Heart right ventricle (tissue), 16 donors: ENCODE measurements at regions of chr11 and their contacts with region 1.

Region 1: DNA sequence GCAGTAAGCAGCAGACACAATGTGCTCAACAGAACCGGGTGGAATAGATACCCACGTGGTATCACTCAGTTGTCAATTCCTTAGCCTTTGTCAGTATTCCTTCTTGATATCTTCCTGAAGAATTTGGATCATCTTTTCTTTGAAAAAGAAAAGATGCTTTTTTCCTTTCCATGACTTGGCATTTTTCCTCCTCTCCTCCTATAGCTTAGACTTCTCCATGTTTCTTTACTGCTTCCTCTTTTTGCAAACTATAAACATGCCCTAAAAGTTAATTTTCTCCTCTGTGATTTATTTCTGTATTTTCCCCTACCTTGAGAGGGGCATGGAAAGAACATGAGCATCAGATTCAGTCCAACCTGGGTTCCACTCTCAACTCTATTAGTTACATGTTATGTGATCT is 11.7 kb downstream of the CBLIF start:
- DNase-seq: no peak
- ATAC-seq: no peak
- H3K4me3 ChIP-seq: no peak overlapping the region
- H3K27ac ChIP-seq: no peak overlapping the region
- H3K4me1 ChIP-seq: no peaks in the 10 kb centered on the region
- H3K27me3 ChIP-seq: no peaks in the 10 kb centered on the region
- CTCF ChIP-seq: no peak

Region 2: DNA sequence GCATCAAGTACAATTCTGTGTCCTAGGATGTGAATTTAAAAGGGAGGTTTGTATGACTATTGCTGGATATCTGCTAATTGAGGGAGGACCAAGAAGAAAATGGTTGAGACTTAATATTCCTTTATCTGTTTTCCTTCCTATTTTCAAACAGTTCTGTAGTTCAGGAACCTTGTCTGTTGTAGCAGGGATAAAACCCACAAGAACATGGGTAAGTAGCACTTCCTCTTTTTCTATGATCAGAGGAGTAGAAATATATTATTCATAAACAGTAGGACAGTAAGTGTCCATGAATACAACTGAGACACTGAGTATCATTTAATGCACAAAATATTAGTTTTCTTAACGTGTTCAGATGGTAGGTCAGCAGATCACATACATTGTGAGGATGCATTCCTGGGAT is 230.5 kb after region 1 on chr11:
- intact Hi-C with region 1: no loop called
- DNase-seq: no peak
- ATAC-seq: no peak
- H3K4me3 ChIP-seq: no peak overlapping the region
- H3K27ac ChIP-seq: no peak overlapping the region
- H3K4me1 ChIP-seq: peaks cover 0 to 2% (median 0%) of the 10 kb centered on the region in 9 donors
- H3K27me3 ChIP-seq: peaks cover 0 to 4% (median 0%) of the 10 kb centered on the region in 7 donors
- CTCF ChIP-seq: no peak

Region 3: GRCh38 chr11:60130496-60130895 is 296.9 kb after region 1 on chr11:
- intact Hi-C with region 1: loop called in 4 of 10 experiments (anchors 5 to 10 kb)
- DNase-seq: peak in 1 of 2 donors; percentile 8
- ATAC-seq: peak in 4 of 8 donors; percentile 38 to 62 (median 50)
- H3K4me3 ChIP-seq: no peak overlapping the region
- H3K27ac ChIP-seq: no peak overlapping the region
- H3K4me1 ChIP-seq: no peaks in the 10 kb centered on the region
- H3K27me3 ChIP-seq: no peaks in the 10 kb centered on the region
- CTCF ChIP-seq: peak in 7 of 9 donors; percentile 29 to 49 (median 33)

Region 4: GRCh38 chr11:60634126-60634525 is 800.5 kb after region 1 on chr11:
- intact Hi-C with region 1: no loop called
- DNase-seq: no peak
- ATAC-seq: no peak
- H3K4me3 ChIP-seq: no peak overlapping the region
- H3K27ac ChIP-seq: no peak overlapping the region
- H3K4me1 ChIP-seq: no peaks in the 10 kb centered on the region
- H3K27me3 ChIP-seq: no peaks in the 10 kb centered on the region
- CTCF ChIP-seq: no peak